Prostate gland (tissue), 2 donors: ENCODE measurements at regions of chr4 and their contacts with region 1.

Region 1: DNA sequence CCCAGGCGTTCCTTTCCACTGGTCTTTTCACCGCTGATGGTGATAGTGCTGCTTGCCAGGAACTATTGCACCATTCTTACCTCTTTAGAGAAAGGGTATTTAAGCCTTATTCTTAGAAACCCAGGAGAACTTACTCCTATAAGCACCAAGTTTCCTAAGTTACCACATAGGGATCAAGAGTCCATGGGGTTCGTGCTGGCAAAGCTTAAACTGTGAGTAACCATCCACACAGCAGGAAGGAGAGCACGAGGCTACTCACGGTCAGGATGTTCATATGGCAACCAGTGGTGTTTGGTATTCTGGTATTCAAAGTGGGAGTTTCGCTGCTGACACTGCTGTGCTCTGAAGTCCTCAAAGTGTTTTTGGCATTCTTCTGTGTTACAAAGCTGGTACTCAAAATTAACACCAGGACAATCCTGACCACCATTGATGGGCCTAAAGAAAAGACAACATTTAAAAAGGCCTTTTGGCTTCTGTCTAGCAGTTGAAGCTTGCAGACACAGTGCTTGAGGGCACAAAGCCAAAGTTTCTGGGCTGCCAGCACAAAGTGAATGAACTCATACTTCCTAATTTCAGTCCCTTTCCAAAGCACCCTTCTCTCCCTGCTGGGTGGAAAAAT is 256.9 kb downstream of the ADAMTS3 start:
- DNase-seq: peak; percentile 51
- H3K4me3 ChIP-seq: no peak overlapping the region
- H3K27ac ChIP-seq: no peak overlapping the region
- H3K4me1 ChIP-seq: no peaks in the 10 kb centered on the region
- H3K27me3 ChIP-seq: no peaks in the 10 kb centered on the region
- CTCF ChIP-seq: no peak
- POLR2A ChIP-seq: no peak

Region 2: GRCh38 chr4:72496112-72496511 is 184.0 kb after region 1 on chr4:
- intact Hi-C with region 1: no loop called
- DNase-seq: no peak
- H3K4me3 ChIP-seq: no peak overlapping the region
- H3K27ac ChIP-seq: no peak overlapping the region
- H3K4me1 ChIP-seq: no peaks in the 10 kb centered on the region
- H3K27me3 ChIP-seq: no peaks in the 10 kb centered on the region
- CTCF ChIP-seq: peak in 1 of 4 experiments; percentile 21
- POLR2A ChIP-seq: no peak

Region 3: GRCh38 chr4:72919937-72920336 is 607.8 kb after region 1 on chr4:
- intact Hi-C with region 1: loop called (anchors 10 kb)
- DNase-seq: no peak
- H3K4me3 ChIP-seq: no peak overlapping the region
- H3K27ac ChIP-seq: no peak overlapping the region
- H3K4me1 ChIP-seq: no peaks in the 10 kb centered on the region
- H3K27me3 ChIP-seq: no peaks in the 10 kb centered on the region
- CTCF ChIP-seq: no peak
- POLR2A ChIP-seq: no peak